Caco-2 (cell line): ENCODE measurements at regions of chr15 and their contacts with region 1.

Region 1: GRCh38 chr15:39580117-39580484 is 778 bp upstream of the THBS1 start:
- DNase-seq: peak; percentile 85 to 93
- H3K4me3 ChIP-seq: peak overlapping the region; percentile 84
- H3K4me3 Mint-ChIP-seq: peak overlapping the region; percentile 78
- H3K27ac Mint-ChIP-seq: peak overlapping the region; percentile 43
- H3K4me1 ChIP-seq: peaks cover 26% of the 10 kb centered on the region; the same call in 1 of the 2 replicates
- H3K4me1 Mint-ChIP-seq: peaks cover under 1% of the 10 kb centered on the region
- H3K27me3 ChIP-seq: no peaks in the 10 kb centered on the region
- H3K27me3 Mint-ChIP-seq: no peaks in the 10 kb centered on the region
- CTCF ChIP-seq: peak; percentile 88 to 95

Region 2: GRCh38 chr15:38817427-38818156 is 762.5 kb before region 1 on chr15:
- CTCF ChIA-PET with region 1: no interaction called
- POLR2A ChIA-PET with region 1: no interaction called
- intact Hi-C with region 1: loop called (anchors 1 kb)
- DNase-seq: peak; percentile 84 to 93
- H3K4me3 ChIP-seq: no peak overlapping the region
- H3K4me3 Mint-ChIP-seq: no peak overlapping the region
- H3K27ac Mint-ChIP-seq: no peak overlapping the region
- H3K4me1 ChIP-seq: no peaks in the 10 kb centered on the region
- H3K4me1 Mint-ChIP-seq: no peaks in the 10 kb centered on the region
- H3K27me3 ChIP-seq: no peaks in the 10 kb centered on the region
- H3K27me3 Mint-ChIP-seq: peaks cover 4% of the 10 kb centered on the region
- CTCF ChIP-seq: peak; percentile 99

Region 3: GRCh38 chr15:38954090-38954489 is 626.0 kb before region 1 on chr15:
- CTCF ChIA-PET with region 1: no interaction called
- POLR2A ChIA-PET with region 1: no interaction called
- intact Hi-C with region 1: no loop called
- DNase-seq: no peak
- H3K4me3 ChIP-seq: no peak overlapping the region
- H3K4me3 Mint-ChIP-seq: no peak overlapping the region
- H3K27ac Mint-ChIP-seq: no peak overlapping the region
- H3K4me1 ChIP-seq: no peaks in the 10 kb centered on the region
- H3K4me1 Mint-ChIP-seq: no peaks in the 10 kb centered on the region
- H3K27me3 ChIP-seq: no peaks in the 10 kb centered on the region
- H3K27me3 Mint-ChIP-seq: peaks cover 5% of the 10 kb centered on the region
- CTCF ChIP-seq: no peak

Region 4: DNA sequence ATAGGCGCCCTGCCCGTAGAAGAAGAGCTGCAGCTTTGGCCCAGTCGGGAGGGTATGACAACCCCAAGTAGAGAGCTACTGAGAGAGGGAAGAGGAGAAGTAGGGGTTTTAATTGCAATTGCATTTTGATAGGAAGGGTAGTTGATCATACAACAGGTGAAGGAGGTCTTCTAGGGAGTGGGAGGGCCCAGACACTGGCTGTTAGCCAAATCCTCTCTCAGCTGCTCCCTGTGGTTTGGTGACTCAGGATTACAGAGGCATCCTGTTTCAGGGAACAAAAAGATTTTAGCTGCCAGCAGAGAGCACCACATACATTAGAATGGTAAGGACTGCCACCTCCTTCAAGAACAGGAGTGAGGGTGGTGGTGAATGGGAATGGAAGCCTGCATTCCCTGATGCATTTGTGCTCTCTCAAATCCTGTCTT is 408.1 kb before region 1 on chr15:
- CTCF ChIA-PET with region 1: interaction called, 36 read pairs
- POLR2A ChIA-PET with region 1: interaction called, 12 read pairs
- intact Hi-C with region 1: loop called (anchors 1 kb)
- DNase-seq: peak; percentile 71
- H3K4me3 ChIP-seq: no peak overlapping the region
- H3K4me3 Mint-ChIP-seq: no peak overlapping the region
- H3K27ac Mint-ChIP-seq: peak overlapping the region; percentile 19
- H3K4me1 ChIP-seq: peaks cover 16% of the 10 kb centered on the region
- H3K4me1 Mint-ChIP-seq: peaks cover 19% of the 10 kb centered on the region
- H3K27me3 ChIP-seq: no peaks in the 10 kb centered on the region
- H3K27me3 Mint-ChIP-seq: no peaks in the 10 kb centered on the region
- CTCF ChIP-seq: peak in 1 of 2 experiments; percentile 28

Region 5: GRCh38 chr15:39312984-39313383 is 267.1 kb before region 1 on chr15:
- CTCF ChIA-PET with region 1: interaction called, 4 read pairs
- POLR2A ChIA-PET with region 1: interaction called, 4 read pairs
- intact Hi-C with region 1: loop called (anchors 2 kb)
- DNase-seq: peak; percentile 16 to 35
- H3K4me3 ChIP-seq: no peak overlapping the region
- H3K4me3 Mint-ChIP-seq: no peak overlapping the region
- H3K27ac Mint-ChIP-seq: no peak overlapping the region
- H3K4me1 ChIP-seq: peaks cover 5% of the 10 kb centered on the region; the same call in 1 of the 2 replicates
- H3K4me1 Mint-ChIP-seq: no peaks in the 10 kb centered on the region
- H3K27me3 ChIP-seq: no peaks in the 10 kb centered on the region
- H3K27me3 Mint-ChIP-seq: no peaks in the 10 kb centered on the region
- CTCF ChIP-seq: peak in 1 of 2 experiments; percentile 25

Region 6: GRCh38 chr15:39453500-39454073 is 126.5 kb before region 1 on chr15:
- CTCF ChIA-PET with region 1: interaction called, 6 read pairs
- POLR2A ChIA-PET with region 1: interaction called, 13 read pairs
- intact Hi-C with region 1: no loop called
- DNase-seq: no peak
- H3K4me3 ChIP-seq: no peak overlapping the region
- H3K4me3 Mint-ChIP-seq: no peak overlapping the region
- H3K27ac Mint-ChIP-seq: no peak overlapping the region
- H3K4me1 ChIP-seq: peaks cover 28% of the 10 kb centered on the region
- H3K4me1 Mint-ChIP-seq: peaks cover 28% of the 10 kb centered on the region
- H3K27me3 ChIP-seq: no peaks in the 10 kb centered on the region
- H3K27me3 Mint-ChIP-seq: no peaks in the 10 kb centered on the region
- CTCF ChIP-seq: no peak

Region 7: DNA sequence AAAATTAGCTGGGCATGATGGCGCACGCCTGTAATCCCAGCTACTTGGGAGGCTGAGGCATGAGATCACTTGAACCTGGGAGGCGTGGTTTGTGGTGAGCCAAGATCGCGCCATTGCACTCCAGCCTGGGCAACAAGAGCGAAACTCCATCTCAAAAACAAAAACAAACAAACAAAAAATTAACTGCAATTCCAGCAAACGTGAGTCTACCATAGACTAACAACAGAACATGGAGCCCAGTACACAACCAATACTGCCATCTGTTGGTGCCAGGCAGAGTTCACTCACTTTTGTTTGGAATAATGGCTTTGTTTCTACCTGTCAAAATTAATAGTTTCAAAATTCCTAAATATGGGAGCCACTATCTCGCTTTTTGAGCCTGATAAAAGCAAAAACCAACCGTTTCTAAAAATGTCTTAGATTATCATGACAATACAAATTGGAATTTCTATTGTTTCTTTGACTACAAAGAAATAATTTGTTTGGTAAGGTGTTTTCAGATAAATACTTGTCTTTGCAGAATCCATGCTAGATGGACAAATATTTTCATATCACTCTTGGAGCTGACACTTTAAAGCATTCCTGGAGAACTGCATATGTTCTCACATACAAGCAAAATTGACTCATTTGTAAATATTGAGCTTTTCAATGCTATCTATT is 294.9 kb after region 1 on chr15:
- CTCF ChIA-PET with region 1: no interaction called
- POLR2A ChIA-PET with region 1: no interaction called
- intact Hi-C with region 1: loop called (anchors 10 kb)
- DNase-seq: peak in 1 of 2 experiments; percentile 46
- H3K4me3 ChIP-seq: no peak overlapping the region
- H3K4me3 Mint-ChIP-seq: no peak overlapping the region
- H3K27ac Mint-ChIP-seq: no peak overlapping the region
- H3K4me1 ChIP-seq: peaks cover 5% of the 10 kb centered on the region; the same call in 1 of the 2 replicates
- H3K4me1 Mint-ChIP-seq: peaks cover 24% of the 10 kb centered on the region
- H3K27me3 ChIP-seq: no peaks in the 10 kb centered on the region
- H3K27me3 Mint-ChIP-seq: no peaks in the 10 kb centered on the region
- CTCF ChIP-seq: peak; percentile 49 to 67

Region 8: DNA sequence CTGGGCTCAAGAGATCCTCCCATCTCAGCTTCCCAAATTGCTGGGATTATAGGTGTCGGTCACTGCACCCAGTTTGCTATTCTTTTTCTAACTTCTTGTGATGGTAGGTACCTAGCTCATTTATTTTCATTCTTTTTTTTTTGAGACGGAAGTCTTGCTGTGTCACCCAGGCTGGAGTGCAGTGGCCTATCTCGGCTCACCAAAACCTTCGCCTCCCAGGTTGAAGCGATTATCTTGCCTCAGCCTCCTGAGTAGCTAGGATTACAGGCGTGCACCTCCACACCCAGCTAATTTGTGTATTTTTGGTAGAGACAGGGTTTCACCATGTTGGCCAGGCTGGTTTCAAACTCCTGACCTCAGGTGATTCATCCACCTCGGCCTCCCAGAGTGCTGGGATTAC is 1084.8 kb after region 1 on chr15:
- CTCF ChIA-PET with region 1: no interaction called
- POLR2A ChIA-PET with region 1: no interaction called
- intact Hi-C with region 1: no loop called
- DNase-seq: no peak
- H3K4me3 ChIP-seq: no peak overlapping the region
- H3K4me3 Mint-ChIP-seq: no peak overlapping the region
- H3K27ac Mint-ChIP-seq: no peak overlapping the region
- H3K4me1 ChIP-seq: no peaks in the 10 kb centered on the region
- H3K4me1 Mint-ChIP-seq: no peaks in the 10 kb centered on the region
- H3K27me3 ChIP-seq: no peaks in the 10 kb centered on the region
- H3K27me3 Mint-ChIP-seq: no peaks in the 10 kb centered on the region
- CTCF ChIP-seq: no peak